SK-N-SH (cell line): ENCODE measurements at regions of chr19 and their contacts with region 1.

Region 1: GRCh38 chr19:5031231-5032100 is 62.6 kb downstream of the KDM4B start:
- DNase-seq: peak; percentile 97
- H3K4me3 ChIP-seq: peak overlapping the region in 1 of 2 experiments; percentile 42; a peak in 1 of 4 replicates
- H3K27ac ChIP-seq: no peak overlapping the region; a peak in 1 of 4 replicates
- H3K4me1 ChIP-seq: peaks cover 3 to 16% of the 10 kb centered on the region in 2 experiments; a peak in 2 of 4 replicates
- H3K27me3 ChIP-seq: no peaks in the 10 kb centered on the region
- CTCF ChIP-seq: peak; percentile 93
- EP300 ChIP-seq: no peak
- RAD21 ChIP-seq: peak; percentile 95

Region 2: GRCh38 chr19:4867534-4868285 is 163.8 kb before region 1 on chr19 and contains the start of gene PLIN3:
- CTCF ChIA-PET with region 1: interaction called, 50 read pairs
- POLR2A ChIA-PET with region 1: interaction called, 4 read pairs
- DNase-seq: peak; percentile 100
- H3K4me3 ChIP-seq: peak within 1 kb of the TSS; percentile 60 to 97
- H3K27ac ChIP-seq: peak within 1 kb of the TSS; percentile 55 to 84; a peak in 3 of 4 replicates
- H3K4me1 ChIP-seq: peaks cover 6 to 7% of the 10 kb centered on the region in 2 experiments; a peak in 1 of 4 replicates
- H3K27me3 ChIP-seq: no peaks in the 10 kb centered on the region
- CTCF ChIP-seq: no peak
- EP300 ChIP-seq: no peak
- RAD21 ChIP-seq: no peak
- polyA plus RNA-seq, gene PLIN3: 129 and 136 TPM in 2 replicates

Region 3: DNA sequence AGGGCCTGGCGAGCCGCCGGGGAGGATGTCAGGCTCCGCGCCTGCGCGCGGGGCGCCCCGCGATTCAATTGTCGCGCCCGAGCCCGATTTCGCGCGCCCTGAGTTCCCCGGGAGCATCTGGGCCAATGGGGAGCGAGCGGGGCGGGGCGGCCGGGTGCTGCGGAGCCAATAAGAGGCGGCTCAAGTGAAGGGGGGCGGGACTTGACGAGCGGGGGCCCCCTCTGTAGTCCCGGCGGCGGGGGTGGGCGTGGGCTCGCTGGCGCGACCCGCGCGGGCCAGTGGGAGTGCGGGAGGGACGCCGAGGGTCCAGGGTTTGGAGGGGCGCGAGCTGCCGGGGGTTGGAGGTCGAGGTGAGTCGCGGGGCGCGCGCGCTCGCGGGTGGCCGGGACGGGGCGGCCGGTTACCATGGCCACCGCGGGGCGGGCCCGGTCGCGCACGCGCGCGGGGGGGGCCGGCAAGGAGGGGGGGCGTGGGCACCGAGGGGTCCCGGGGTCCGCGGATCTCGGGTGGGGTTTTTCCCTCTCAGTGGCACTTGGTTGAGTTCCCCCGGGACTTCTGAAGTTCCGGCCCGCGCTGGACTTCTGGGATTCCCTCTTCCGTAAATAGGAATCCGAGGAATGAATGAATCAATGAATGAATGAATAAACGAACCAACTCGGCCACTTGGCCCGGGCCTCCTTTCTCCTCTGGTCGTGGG is 121.4 kb before region 1 on chr19:
- CTCF ChIA-PET with region 1: interaction called, 36 read pairs
- POLR2A ChIA-PET with region 1: no interaction called
- DNase-seq: peak; percentile 99
- H3K4me3 ChIP-seq: peak overlapping the region; percentile 62 to 82
- H3K27ac ChIP-seq: peak overlapping the region; percentile 81 to 84
- H3K4me1 ChIP-seq: peaks cover 27 to 31% of the 10 kb centered on the region in 2 experiments; a peak in 3 of 4 replicates
- H3K27me3 ChIP-seq: no peaks in the 10 kb centered on the region
- CTCF ChIP-seq: no peak
- EP300 ChIP-seq: no peak
- RAD21 ChIP-seq: no peak

Region 4: DNA sequence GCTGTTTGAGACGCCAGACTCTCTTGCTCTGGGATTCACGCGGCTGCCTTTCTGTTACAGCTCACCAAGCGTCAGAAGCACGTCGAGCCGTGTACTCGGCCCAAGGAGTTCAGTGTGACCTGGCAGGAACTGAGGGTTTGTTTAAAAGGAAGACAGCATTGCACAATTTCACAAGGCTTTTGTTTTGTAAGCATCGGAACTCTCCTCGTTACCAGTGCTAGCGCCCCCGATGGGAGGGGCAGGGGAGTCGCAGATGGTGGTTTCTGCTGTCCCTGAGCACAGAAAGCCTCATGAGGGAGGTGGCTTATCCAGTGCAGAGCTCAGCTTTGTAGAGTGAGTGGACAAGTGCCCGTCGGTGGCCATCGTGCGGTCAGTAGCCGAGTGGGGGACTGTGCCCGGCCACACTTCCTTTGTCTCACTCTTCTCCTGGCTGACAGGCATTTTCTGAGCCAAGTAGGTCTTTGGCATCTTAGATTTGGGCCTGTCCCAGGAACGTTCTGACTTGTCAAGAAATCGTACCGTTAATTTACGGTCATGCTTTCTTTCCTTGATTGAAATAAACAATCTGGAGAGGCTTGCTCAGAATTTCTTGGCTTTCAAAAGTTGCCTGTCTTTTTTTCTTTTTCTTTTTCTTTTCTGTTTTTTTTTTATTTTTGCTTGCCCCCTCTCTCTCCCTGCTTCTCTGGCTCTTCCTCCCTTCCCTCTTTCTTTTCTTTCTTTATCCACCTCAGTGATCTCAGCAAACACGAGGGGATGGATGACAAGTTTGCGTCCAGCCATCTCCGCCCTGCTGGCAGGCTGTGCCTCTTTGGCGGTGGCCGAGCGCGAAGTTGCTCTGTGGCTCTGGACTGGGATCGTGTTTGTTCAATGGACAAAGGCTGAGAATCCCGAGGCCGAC is 54.8 kb before region 1 on chr19:
- CTCF ChIA-PET with region 1: interaction called, 62 read pairs
- POLR2A ChIA-PET with region 1: no interaction called
- DNase-seq: peak; percentile 47
- H3K4me3 ChIP-seq: no peak overlapping the region
- H3K27ac ChIP-seq: peak overlapping the region; percentile 68 to 77
- H3K4me1 ChIP-seq: peaks cover 33 to 37% of the 10 kb centered on the region in 2 experiments
- H3K27me3 ChIP-seq: no peaks in the 10 kb centered on the region
- CTCF ChIP-seq: peak; percentile 35; the same call in 1 of the 2 replicates
- EP300 ChIP-seq: no peak
- RAD21 ChIP-seq: no peak

Region 5: DNA sequence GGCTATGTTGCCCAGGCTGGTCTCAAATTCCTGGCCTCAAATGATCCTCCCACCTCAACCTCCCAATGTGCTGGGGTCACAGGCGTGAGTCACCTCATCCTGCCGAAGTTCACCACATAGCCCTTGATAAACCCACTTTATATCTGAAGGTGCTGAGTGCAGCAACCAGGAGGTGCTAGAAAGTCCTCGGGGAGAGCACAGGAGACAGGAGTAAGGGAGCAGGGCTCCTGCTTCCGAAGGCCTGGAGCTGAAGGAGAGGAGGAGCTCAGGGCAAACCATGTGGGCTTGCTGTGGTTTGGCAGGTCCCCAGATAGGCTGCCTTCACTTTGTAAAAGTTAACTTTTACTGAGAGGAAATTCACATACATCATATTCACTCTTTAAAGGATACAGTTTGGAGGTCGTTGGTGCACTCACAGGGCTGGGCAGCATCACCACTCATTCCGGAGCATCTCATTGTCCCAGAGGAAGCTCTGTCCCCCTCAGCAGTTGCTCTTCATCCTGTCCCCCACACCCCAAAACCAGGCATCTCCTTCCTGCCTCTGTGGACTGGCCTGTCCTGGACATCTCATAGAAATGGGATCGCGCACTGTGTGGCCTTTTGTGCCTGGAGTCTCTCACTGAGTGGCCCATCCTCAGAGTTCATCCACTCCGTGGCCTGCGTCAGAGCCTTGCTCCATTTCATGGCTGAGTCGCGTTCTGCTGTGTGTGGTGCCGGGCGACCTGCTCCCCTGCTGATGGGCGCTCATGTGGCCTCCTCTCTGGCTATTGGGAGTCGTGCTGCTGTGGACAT is 13.0 kb before region 1 on chr19:
- CTCF ChIA-PET with region 1: interaction called, 46 read pairs
- POLR2A ChIA-PET with region 1: no interaction called
- DNase-seq: no peak
- H3K4me3 ChIP-seq: no peak overlapping the region
- H3K27ac ChIP-seq: no peak overlapping the region
- H3K4me1 ChIP-seq: peaks cover 0 to 3% of the 10 kb centered on the region in 2 experiments; a peak in 1 of 4 replicates
- H3K27me3 ChIP-seq: no peaks in the 10 kb centered on the region
- CTCF ChIP-seq: no peak
- EP300 ChIP-seq: no peak
- RAD21 ChIP-seq: no peak